Left lung (tissue), 14 donors: ENCODE measurements at regions of chr6 and their contacts with region 1.

Region 1: GRCh38 chr6:132669690-132670291 is 10.8 kb upstream of the TAAR1 start:
- DNase-seq: peak in 2 of 4 donors; percentile 19 to 29
- ATAC-seq: peak; percentile 93
- H3K4me3 ChIP-seq: no peak overlapping the region
- H3K27ac ChIP-seq: peak overlapping the region in 1 of 2 donors; percentile 67
- H3K4me1 ChIP-seq: peaks cover 0 to 9% of the 10 kb centered on the region in 2 donors
- H3K27me3 ChIP-seq: no peaks in the 10 kb centered on the region
- CTCF ChIP-seq: peak; percentile 46 to 53

Region 2: DNA sequence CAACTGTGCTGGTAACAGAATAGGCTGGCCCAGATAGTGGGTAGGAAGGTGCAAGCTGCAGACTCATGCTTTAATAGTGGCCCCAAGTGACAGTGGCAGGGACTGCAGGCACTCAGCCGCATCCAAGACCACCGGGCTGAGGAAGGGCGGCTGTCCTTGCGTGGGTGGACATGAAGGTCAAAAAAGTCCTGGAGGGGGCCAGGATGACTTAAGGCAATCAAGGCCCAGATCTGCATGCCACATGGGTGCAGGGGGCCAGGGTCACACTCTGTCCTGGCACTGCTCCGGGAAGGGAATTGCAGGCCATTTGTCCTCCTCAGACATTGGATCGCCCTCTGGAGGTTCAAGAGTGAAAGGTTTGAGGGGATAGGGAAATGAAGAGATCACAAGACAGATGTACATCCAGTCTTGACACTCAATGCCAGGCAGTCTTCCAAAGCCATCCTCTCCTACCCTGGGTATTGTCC is 98.3 kb after region 1 on chr6:
- intact Hi-C with region 1: loop called in 1 of 2 experiments (anchors 5 kb)
- DNase-seq: peak; percentile 11 to 60 (median 33)
- ATAC-seq: peak; percentile 96
- H3K4me3 ChIP-seq: no peak overlapping the region
- H3K27ac ChIP-seq: no peak overlapping the region
- H3K4me1 ChIP-seq: peaks cover 0 to 17% of the 10 kb centered on the region in 2 donors
- H3K27me3 ChIP-seq: no peaks in the 10 kb centered on the region
- CTCF ChIP-seq: peak; percentile 43 to 65